ENCODE measurements at regions of chr11 and their contacts with region 1.

Region 1: GRCh38 chr11:83249972-83250593 is 36.1 kb downstream of the CCDC90B start:
- DNase-seq: no peak
- ATAC-seq: peak; percentile 93
- H3K4me3 ChIP-seq: no peak overlapping the region
- H3K27ac ChIP-seq: no peak overlapping the region
- H3K4me1 ChIP-seq: peaks cover 12% of the 10 kb centered on the region
- H3K27me3 ChIP-seq: no peaks in the 10 kb centered on the region
- CTCF ChIP-seq: peak; percentile 51 to 68 (median 66)
- EP300 ChIP-seq: no peak
- POLR2A ChIP-seq: no peak
- RAD21 ChIP-seq: peak; percentile 75

Region 2: DNA sequence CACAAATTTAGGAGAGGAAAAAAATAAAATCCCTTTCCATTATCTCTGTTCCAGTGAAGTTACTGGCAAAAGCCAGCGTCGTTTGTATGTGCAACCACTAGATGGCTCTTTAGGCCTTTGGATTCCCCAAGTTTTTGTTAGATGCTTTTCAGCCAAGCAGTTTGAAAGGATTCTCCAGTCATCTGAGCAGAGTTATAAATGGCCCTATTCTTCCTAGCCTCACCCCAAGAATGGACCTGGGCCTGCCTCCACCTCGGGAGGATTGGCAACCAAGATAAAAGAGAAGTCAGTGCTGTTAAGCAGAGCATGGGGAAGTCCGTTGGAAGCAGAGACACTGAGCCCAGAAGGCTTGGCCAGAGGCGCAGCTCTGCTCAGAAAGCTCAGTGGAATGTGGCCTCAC is 531.8 kb before region 1 on chr11:
- CTCF ChIA-PET with region 1: interaction called, 10 read pairs
- POLR2A ChIA-PET with region 1: no interaction called
- RAD21 ChIA-PET with region 1: no interaction called
- SMC1A ChIA-PET with region 1: no interaction called
- in situ Hi-C with region 1: no loop called
- intact Hi-C with region 1: no loop called
- DNase-seq: no peak
- ATAC-seq: peak; percentile 75
- H3K4me3 ChIP-seq: no peak overlapping the region
- H3K27ac ChIP-seq: no peak overlapping the region
- H3K4me1 ChIP-seq: no peaks in the 10 kb centered on the region
- H3K27me3 ChIP-seq: no peaks in the 10 kb centered on the region
- CTCF ChIP-seq: peak; percentile 72 to 75 (median 73)
- EP300 ChIP-seq: no peak
- POLR2A ChIP-seq: no peak
- RAD21 ChIP-seq: peak; percentile 76

Region 3: DNA sequence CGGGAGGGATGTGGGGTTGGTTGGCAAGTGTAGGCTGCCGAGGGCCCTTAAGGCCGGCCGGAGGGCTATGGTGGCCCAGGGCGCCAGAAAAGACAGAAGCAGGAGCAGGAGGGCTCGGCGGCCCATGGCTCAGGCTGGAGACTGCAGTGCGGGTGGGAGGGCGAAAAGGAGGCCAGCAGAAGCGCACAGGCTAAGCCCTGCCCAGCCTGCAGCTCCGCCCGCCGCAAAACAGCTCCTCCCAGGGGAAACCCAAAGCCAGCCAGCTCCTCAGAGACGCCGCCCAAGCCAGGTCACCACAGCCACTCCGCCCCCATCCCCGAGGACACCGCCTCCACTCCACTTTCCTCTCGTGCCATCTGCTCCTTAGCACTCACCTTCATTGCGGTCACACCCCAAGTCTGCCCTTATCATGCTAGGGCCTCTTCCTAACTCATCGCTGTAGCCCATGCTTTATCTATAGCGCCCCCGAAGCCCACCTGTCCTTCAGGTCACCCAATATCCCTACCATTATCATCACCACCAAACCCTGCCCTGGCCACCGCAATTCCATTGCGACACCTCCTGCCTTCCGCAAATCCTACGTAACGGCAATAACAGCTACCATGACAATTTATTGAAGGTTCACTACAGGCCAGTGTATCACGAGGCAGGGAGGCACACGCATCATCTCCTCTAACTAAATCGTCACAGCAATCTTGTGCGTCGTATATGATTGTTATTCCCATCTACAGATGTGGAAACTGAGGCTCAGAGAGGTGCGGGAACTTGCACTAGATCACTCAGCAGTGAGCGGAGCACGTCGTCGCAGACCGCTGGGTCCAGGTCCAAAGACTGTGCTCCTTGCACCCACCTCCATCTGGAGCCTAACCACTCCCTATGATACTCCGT is 349.6 kb before region 1 on chr11 and contains the start of gene PRCP:
- CTCF ChIA-PET with region 1: interaction called, 72 read pairs
- POLR2A ChIA-PET with region 1: interaction called, 3 read pairs
- RAD21 ChIA-PET with region 1: interaction called, 20 read pairs
- SMC1A ChIA-PET with region 1: interaction called, 56 read pairs
- in situ Hi-C with region 1: loop called (anchors 5 kb)
- intact Hi-C with region 1: no loop called
- DNase-seq: peak; percentile 84
- ATAC-seq: peak; percentile 88
- H3K4me3 ChIP-seq: peak within 1 kb of the TSS; percentile 82
- H3K27ac ChIP-seq: peak within 1 kb of the TSS; percentile 84
- H3K4me1 ChIP-seq: peaks cover 15% of the 10 kb centered on the region
- H3K27me3 ChIP-seq: no peaks in the 10 kb centered on the region
- CTCF ChIP-seq: no peak
- EP300 ChIP-seq: 0 out of 4 replicates have a peak, but pooled peaks of 1 of the 2 experiments have one; percentile 12
- POLR2A ChIP-seq: peak; percentile 84
- RAD21 ChIP-seq: no peak
- polyA plus RNA-seq, gene PRCP: 21.5 to 25.3 TPM

Region 4: DNA sequence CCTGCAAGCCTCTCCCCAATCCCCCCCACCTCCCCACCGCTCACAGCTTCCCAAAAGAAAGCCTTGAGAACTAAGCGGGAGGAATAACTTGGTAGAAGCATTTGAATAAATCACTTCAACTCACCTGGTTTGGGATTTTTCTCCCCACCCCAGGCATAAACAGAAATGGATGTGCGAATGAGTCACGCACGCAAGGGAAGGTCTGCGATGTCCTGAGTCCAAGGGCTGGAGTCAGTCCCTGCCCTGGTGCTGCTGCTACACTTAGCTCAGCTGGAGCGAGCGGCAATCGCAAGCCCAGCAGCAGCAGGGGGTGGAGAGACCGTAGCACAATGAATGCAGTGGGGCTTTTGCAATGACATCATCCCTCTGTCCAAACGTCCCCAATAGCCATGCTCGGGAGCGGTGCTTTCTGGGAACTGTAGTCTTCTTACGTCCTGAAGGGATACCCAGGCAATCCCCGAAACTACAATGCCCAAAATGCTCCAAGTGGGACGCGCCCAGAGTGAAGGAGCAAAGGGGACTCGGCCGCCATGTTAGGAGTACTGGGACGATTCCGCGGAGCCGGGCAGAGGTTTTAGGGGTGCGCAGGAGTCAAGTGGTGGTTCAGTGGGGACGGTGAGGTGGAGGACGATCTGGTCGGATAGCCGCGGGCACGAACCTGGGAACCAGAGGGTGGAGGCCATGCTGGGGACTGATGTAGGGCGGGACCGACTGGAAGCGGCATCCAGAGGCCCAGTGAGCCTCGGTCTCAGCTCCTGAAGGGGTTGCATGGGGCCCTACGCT is 178.3 kb before region 1 on chr11 and contains the start of gene RAB30:
- CTCF ChIA-PET with region 1: interaction called, 16 read pairs
- POLR2A ChIA-PET with region 1: no interaction called
- RAD21 ChIA-PET with region 1: interaction called, 3 read pairs
- SMC1A ChIA-PET with region 1: interaction called, 11 read pairs
- in situ Hi-C with region 1: no loop called
- intact Hi-C with region 1: no loop called
- DNase-seq: peak; percentile 99
- ATAC-seq: peak; percentile 88
- H3K4me3 ChIP-seq: peak within 1 kb of the TSS; percentile 97
- H3K27ac ChIP-seq: peak within 1 kb of the TSS; percentile 92
- H3K4me1 ChIP-seq: peaks cover 16% of the 10 kb centered on the region
- H3K27me3 ChIP-seq: no peaks in the 10 kb centered on the region
- CTCF ChIP-seq: no peak
- EP300 ChIP-seq: no peak
- POLR2A ChIP-seq: peak; percentile 93
- RAD21 ChIP-seq: peak; percentile 33; the same call in 1 of the 2 replicates
- polyA plus RNA-seq, gene RAB30: 9.8 to 14.2 TPM

Region 5: GRCh38 chr11:83222499-83222898 is 27.6 kb before region 1 on chr11:
- CTCF ChIA-PET with region 1: interaction called, 13 read pairs
- POLR2A ChIA-PET with region 1: no interaction called
- RAD21 ChIA-PET with region 1: interaction called, 3 read pairs
- SMC1A ChIA-PET with region 1: interaction called, 3 read pairs
- in situ Hi-C with region 1: no loop called
- intact Hi-C with region 1: no loop called
- DNase-seq: no peak
- ATAC-seq: no peak
- H3K4me3 ChIP-seq: no peak overlapping the region
- H3K27ac ChIP-seq: no peak overlapping the region
- H3K4me1 ChIP-seq: no peaks in the 10 kb centered on the region
- H3K27me3 ChIP-seq: no peaks in the 10 kb centered on the region
- CTCF ChIP-seq: no peak
- EP300 ChIP-seq: no peak
- POLR2A ChIP-seq: no peak
- RAD21 ChIP-seq: no peak

Region 6: DNA sequence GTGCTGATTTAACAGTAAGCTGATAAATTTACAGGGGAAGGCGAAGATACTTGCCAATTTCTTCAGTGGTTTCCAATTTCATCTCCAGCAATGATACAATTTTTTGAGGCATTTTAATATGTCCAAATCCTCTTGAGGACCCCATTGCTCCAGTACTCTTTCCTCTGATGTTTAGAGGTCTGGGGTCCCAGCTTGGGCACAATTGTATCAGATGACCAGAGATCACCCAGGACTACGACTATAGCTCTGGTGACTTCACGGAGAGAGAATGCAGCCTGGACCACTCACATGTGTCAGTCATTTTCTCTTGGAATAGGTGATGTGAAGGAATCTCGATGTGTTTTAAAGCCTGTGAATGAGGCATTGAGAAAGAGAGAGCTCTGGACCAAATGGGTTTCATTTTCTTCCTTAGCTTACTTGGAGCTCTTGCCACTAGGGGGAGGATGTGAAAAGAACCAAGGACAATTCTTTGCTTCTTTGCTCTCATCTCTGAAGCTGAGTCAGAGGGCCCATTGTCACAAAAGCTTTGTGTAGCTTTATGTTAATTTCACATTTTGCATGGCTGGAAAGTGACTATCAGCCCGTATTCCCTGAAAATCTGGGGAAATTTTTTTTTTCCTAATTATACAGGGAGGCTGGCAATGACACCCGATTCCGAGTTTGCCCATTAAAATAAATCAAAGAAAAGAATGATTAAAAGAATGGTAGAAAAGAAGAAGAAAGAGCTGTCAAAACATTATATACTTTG is 42.8 kb after region 1 on chr11:
- CTCF ChIA-PET with region 1: interaction called, 19 read pairs
- POLR2A ChIA-PET with region 1: no interaction called
- RAD21 ChIA-PET with region 1: no interaction called
- SMC1A ChIA-PET with region 1: interaction called, 5 read pairs
- in situ Hi-C with region 1: no loop called
- intact Hi-C with region 1: no loop called
- DNase-seq: no peak
- ATAC-seq: peak; percentile 86
- H3K4me3 ChIP-seq: no peak overlapping the region
- H3K27ac ChIP-seq: no peak overlapping the region
- H3K4me1 ChIP-seq: peaks cover 12% of the 10 kb centered on the region; the same call in 1 of the 2 replicates
- H3K27me3 ChIP-seq: no peaks in the 10 kb centered on the region
- CTCF ChIP-seq: peak; percentile 65 to 74 (median 70)
- EP300 ChIP-seq: no peak
- POLR2A ChIP-seq: no peak
- RAD21 ChIP-seq: peak; percentile 60

Region 7: GRCh38 chr11:84227970-84228665 is 978.0 kb after region 1 on chr11:
- CTCF ChIA-PET with region 1: no interaction called
- POLR2A ChIA-PET with region 1: no interaction called
- RAD21 ChIA-PET with region 1: no interaction called
- SMC1A ChIA-PET with region 1: no interaction called
- in situ Hi-C with region 1: no loop called
- intact Hi-C with region 1: no loop called
- DNase-seq: no peak
- ATAC-seq: no peak
- H3K4me3 ChIP-seq: no peak overlapping the region
- H3K27ac ChIP-seq: no peak overlapping the region
- H3K4me1 ChIP-seq: no peaks in the 10 kb centered on the region
- H3K27me3 ChIP-seq: no peaks in the 10 kb centered on the region
- CTCF ChIP-seq: no peak
- EP300 ChIP-seq: no peak
- POLR2A ChIP-seq: no peak
- RAD21 ChIP-seq: no peak

Measured in GM12878 (cell line).